Ascending aorta (tissue), 2 donors: ENCODE measurements at regions of chr9 and their contacts with region 1.

Region 1: DNA sequence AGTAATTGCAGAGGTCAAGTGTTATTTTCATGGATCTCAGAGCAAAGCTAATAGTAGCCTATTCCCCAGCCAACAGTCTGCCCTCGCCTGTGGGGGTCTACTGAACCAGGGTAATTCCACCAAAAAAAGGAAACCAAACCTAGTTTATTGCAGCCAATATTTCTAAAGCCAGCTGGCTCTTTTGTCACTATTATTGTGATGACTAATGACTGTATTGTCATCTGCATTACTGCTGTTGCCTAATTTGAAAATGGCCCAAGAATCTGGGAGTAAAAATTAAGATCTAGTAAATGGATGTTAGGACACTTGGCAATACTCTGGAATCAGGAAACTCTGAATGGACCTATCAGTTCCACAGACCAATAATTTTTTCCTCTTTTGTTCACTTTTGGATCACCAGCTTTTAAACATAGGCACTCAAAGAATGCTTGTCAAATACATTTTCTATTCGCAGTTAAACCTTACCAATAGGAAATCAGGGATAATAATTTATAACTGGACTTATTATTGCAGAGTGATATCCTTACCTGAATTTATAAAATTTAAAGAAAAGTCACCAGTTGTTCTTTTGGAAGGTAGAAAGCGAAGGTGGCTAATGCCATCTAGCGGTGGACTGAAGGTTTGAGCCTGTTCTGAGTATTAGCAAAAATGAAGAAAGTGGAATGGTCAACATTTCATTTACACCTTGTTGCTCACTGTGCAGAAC is 69.2 kb downstream of the SYK start:
- DNase-seq: no peak
- H3K4me3 ChIP-seq: no peak overlapping the region
- H3K27ac ChIP-seq: no peak overlapping the region
- H3K4me1 ChIP-seq: no peaks in the 10 kb centered on the region
- H3K27me3 ChIP-seq: no peaks in the 10 kb centered on the region
- CTCF ChIP-seq: peak; percentile 32 to 73 (median 73)

Region 2: DNA sequence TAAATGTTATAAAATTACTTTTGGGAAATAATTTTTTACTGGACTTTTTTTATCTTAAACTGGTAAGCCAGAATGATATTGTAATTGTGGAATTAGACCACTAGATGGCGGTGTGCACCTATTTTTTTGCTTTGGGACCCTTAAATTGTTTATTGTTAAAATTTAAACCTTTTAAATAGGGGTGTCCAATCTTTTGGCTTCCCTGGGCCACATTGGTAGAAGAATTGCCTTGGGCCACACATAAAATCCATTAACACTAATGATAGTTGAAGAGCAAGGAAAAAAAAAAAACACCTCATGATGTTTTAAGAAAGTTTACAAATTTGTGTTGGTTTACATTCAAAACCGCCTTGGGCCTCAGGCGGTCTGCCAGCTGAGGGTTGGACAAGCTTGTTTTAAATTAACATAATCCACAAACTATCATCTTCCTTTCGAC is 1294.4 kb before region 1 on chr9:
- intact Hi-C with region 1: loop called (anchors 2 kb)
- DNase-seq: no peak
- H3K4me3 ChIP-seq: no peak overlapping the region
- H3K27ac ChIP-seq: no peak overlapping the region
- H3K4me1 ChIP-seq: no peaks in the 10 kb centered on the region
- H3K27me3 ChIP-seq: no peaks in the 10 kb centered on the region
- CTCF ChIP-seq: peak; percentile 49 to 71 (median 64)

Region 3: DNA sequence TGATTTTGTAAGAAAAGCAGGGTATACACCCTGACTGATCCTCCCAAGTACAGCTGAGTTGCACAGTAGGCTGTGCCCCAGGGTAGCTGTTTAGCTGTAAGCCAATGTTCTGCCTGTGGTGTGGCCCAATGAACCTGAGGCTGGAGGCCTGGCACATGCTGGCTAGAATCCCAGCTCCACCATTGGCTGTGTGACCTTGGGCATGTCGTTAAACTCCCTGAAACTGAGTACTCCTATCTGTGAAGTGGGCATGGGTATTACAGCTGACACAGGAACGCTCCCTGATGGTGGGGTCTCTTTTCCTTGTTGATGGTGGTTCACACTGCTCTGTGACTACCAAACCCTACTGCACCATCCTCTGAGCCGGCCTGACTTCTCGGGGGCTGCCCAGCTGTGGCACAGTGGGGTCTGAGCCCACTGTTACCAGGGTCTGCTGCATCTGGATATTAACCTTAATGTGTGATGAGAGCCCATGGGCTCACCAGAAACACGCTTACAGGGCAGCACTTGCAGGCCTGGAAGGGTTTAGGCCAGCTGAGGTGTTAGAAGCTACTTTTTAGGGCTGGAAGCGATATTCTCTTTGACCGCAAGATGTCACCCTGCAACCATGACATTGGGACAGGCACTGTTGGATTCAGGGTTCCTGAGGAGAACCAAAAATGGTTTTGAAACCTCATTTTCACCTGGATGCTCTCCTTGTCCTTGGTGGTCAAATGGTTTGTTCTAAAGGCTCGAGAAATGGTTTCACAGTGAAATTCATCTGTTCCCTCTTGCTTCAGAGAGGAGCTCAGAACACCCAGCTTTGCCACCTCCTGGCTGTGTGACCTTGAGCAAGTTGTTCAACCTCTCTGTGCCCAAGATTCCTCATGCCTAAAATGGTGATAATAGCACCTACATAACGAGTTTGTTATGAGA is 1272.8 kb before region 1 on chr9:
- intact Hi-C with region 1: loop called (anchors 5 kb)
- DNase-seq: peak in 1 of 2 donors; percentile 71
- H3K4me3 ChIP-seq: no peak overlapping the region
- H3K27ac ChIP-seq: no peak overlapping the region
- H3K4me1 ChIP-seq: no peaks in the 10 kb centered on the region
- H3K27me3 ChIP-seq: no peaks in the 10 kb centered on the region
- CTCF ChIP-seq: peak; percentile 76 to 86 (median 79)

Region 4: GRCh38 chr9:90142580-90142979 is 728.2 kb before region 1 on chr9:
- intact Hi-C with region 1: loop called (anchors 5 kb)
- DNase-seq: no peak
- H3K4me3 ChIP-seq: no peak overlapping the region
- H3K27ac ChIP-seq: no peak overlapping the region
- H3K4me1 ChIP-seq: no peaks in the 10 kb centered on the region
- H3K27me3 ChIP-seq: no peaks in the 10 kb centered on the region
- CTCF ChIP-seq: peak in 2 of 3 experiments; percentile 15 to 34

Region 5: GRCh38 chr9:91001146-91001611 is 130.4 kb after region 1 on chr9:
- intact Hi-C with region 1: no loop called
- DNase-seq: no peak
- H3K4me3 ChIP-seq: no peak overlapping the region
- H3K27ac ChIP-seq: no peak overlapping the region
- H3K4me1 ChIP-seq: no peaks in the 10 kb centered on the region
- H3K27me3 ChIP-seq: no peaks in the 10 kb centered on the region
- CTCF ChIP-seq: no peak